A673 (cell line): ENCODE measurements at regions of chr2 and their contacts with region 1.

Region 1: DNA sequence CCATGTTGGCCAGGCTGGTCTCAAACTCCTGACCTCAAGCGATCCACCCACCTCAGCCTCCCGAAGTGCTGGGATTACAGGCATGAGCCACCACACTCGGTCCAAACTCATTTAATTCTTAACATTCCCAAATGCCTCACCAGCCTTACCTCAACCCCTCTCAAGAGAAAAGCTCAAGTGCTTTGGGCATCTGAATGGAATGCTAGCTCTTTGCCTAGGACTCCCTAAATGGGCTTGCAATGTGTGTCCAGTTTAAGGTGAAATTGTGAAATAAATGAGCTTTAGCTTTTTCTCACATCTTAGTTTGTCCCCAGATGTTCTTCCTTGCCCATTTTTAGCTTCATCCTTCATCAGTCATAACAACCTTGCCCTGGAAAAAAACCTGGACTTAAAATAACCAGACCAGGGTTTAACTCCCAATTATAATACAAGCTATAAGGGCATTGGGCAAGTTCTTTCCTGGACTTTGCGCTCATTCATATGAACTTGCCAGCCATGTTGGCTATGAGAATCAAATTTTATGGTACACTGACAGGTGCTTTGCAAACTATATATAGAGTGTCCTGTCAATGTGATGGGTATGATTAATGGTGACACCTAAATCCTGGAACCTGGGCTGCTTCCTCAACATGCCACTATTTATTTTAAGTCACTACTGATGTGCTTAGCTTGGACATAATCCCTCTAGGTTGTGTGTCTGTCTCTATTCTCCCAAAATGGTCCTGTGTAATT is 95.1 kb upstream of the SERPINE2 start:
- DNase-seq: no peak
- H3K4me3 ChIP-seq: no peak overlapping the region
- H3K27ac ChIP-seq: peak overlapping the region; percentile 63
- H3K4me1 ChIP-seq: peaks cover 67% of the 10 kb centered on the region
- H3K27me3 ChIP-seq: no peaks in the 10 kb centered on the region
- CTCF ChIP-seq: no peak

Region 2: GRCh38 chr2:223970343-223971128 is 163.6 kb before region 1 on chr2:
- CTCF ChIA-PET with region 1: no interaction called
- POLR2A ChIA-PET with region 1: no interaction called
- intact Hi-C with region 1: loop called (anchors 2 kb)
- DNase-seq: peak; percentile 82
- H3K4me3 ChIP-seq: no peak overlapping the region
- H3K27ac ChIP-seq: peak overlapping the region; percentile 19
- H3K4me1 ChIP-seq: peaks cover 28% of the 10 kb centered on the region
- H3K27me3 ChIP-seq: no peaks in the 10 kb centered on the region
- CTCF ChIP-seq: peak; percentile 96

Region 3: GRCh38 chr2:224039124-224039940 is 94.8 kb before region 1 on chr2 and contains the start of gene SERPINE2:
- CTCF ChIA-PET with region 1: no interaction called
- POLR2A ChIA-PET with region 1: interaction called, 3 read pairs
- intact Hi-C with region 1: loop called (anchors 2 kb)
- DNase-seq: peak; percentile 89
- H3K4me3 ChIP-seq: peak within 1 kb of the TSS; percentile 87
- H3K27ac ChIP-seq: peak within 1 kb of the TSS; percentile 68
- H3K4me1 ChIP-seq: peaks cover 45% of the 10 kb centered on the region
- H3K27me3 ChIP-seq: no peaks in the 10 kb centered on the region
- CTCF ChIP-seq: peak; percentile 52
- total RNA-seq, gene SERPINE2: 331 and 380 TPM in 2 replicates

Region 4: DNA sequence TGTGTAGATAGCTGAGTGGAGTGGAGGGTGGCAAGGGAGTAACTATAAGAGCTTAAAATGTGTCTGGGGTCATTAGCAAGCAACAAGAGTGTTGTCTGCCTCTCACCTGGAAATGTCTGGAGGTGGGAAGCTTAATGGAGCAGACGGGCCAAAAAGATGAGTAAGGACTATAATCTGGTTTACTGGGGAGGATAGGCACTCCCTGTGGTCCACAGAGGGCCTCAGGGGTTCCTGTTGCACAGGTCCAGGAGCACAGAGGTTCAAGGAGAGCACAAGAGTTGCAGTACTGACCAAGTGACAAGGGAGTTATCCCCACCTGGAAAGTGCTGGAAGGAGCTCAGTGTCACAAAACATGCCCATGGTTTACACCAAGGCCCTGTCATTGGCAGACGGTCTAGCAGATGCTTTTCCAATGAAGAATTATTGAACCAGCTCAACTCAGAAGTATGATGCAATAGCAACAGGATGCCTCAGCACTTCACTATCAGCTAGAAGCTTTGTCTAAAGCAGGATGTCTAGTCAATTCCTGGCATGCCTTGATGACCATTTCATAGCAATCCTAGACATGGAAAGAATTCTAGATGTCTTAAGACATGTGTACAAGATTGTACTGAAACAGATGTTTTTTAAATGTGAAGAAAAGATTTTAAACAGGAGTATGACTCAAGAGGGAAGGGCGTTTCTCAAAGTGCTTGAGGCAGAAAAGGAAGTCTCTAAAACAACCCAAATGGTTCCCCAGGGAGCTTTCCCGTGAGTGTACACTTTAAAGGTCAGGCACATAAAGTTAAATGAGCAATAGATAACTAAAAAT is 32.1 kb before region 1 on chr2:
- CTCF ChIA-PET with region 1: no interaction called
- POLR2A ChIA-PET with region 1: no interaction called
- intact Hi-C with region 1: loop called (anchors 1 kb)
- DNase-seq: peak; percentile 92
- H3K4me3 ChIP-seq: no peak overlapping the region
- H3K27ac ChIP-seq: peak overlapping the region; percentile 76
- H3K4me1 ChIP-seq: peaks cover 47% of the 10 kb centered on the region
- H3K27me3 ChIP-seq: no peaks in the 10 kb centered on the region
- CTCF ChIP-seq: no peak

Region 5: DNA sequence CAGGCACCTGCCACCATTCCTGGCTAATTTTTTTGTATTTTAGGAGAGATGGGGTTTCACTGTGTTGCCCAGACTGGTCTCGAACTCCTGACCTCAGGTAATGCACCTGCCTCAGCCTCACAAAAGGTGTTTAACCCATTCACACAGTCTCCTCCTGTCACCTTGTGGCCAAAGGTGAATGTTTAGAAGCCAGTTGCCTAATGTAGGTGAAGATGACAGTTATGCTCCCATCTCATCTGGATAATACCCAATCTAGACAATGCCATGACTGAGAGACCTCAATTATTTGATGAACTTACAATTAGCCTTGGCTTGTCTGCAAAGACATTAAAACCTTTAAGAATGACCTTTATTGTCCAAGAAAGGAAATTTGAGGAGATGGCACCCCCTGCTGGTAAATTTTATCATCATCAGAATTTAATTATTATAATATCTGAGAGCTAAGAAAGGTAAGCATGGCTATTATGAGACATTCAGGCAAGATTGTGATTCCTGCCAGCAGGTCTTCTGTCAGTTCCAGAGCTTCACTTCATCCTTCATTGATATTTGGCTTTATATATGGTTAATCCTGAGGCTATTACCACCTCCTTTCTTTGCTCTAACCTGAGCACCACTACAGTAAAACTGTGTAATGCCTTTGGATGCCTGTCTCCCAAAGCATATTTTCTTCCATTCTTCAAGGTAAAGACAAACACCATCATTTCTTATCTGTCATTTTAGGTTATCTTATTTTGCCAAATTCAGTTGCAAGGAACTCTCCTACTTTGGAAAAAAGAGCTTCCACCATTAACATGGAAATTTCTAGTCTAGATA is 150.2 kb after region 1 on chr2:
- CTCF ChIA-PET with region 1: no interaction called
- POLR2A ChIA-PET with region 1: no interaction called
- intact Hi-C with region 1: loop called (anchors 1 kb)
- DNase-seq: peak; percentile 75
- H3K4me3 ChIP-seq: no peak overlapping the region
- H3K27ac ChIP-seq: peak overlapping the region; percentile 15
- H3K4me1 ChIP-seq: peaks cover 48% of the 10 kb centered on the region
- H3K27me3 ChIP-seq: no peaks in the 10 kb centered on the region
- CTCF ChIP-seq: peak; percentile 68